PC-3 (cell line): ENCODE measurements at regions of chr4 and their contacts with region 1.

Region 1: DNA sequence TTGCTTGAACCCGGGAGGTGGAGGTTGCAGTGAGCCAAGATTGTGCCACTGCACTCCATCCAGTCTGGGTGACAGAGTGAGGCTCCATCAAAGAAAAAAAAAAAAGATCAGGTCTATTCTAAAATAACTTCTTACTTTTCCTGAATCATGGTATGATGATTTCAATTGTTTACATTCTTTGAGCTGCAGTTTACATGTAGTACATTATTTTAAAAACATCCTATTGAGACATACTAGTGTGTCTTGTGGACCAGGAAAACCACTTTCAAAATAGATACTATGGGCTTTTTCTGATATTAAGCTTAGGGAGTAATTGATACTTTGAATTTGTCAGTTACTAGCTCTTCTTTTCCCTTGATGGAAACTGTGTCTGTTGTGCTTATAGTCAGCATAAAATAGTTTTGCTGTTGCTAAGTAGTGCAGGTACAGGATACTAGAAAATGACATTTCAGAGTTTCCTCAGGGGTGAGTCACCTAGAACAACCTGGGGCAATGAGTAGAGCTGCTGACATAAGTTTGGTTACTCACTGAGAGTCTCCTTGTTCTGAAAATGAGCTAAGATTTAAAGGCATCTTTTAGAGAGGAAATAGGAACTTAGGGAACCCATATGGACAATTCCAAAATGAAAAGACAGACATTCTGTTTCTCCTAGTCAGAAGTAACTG is 53.2 kb upstream of the C4orf54 start:
- DNase-seq: peak; percentile 87
- ATAC-seq: peak; percentile 95
- H3K4me3 ChIP-seq: no peak overlapping the region
- H3K27ac ChIP-seq: peak overlapping the region; percentile 81
- H3K4me1 ChIP-seq: peaks cover 30% of the 10 kb centered on the region
- H3K27me3 ChIP-seq: no peaks in the 10 kb centered on the region
- CTCF ChIP-seq: no peak

Region 2: GRCh38 chr4:101649790-101650515 is 1939.1 kb after region 1 on chr4:
- CTCF ChIA-PET with region 1: no interaction called
- POLR2A ChIA-PET with region 1: interaction called, 15 read pairs
- intact Hi-C with region 1: no loop called
- DNase-seq: no peak
- ATAC-seq: no peak; the same call in 1 of the 2 replicates
- H3K4me3 ChIP-seq: no peak overlapping the region
- H3K27ac ChIP-seq: no peak overlapping the region
- H3K4me1 ChIP-seq: no peaks in the 10 kb centered on the region
- H3K27me3 ChIP-seq: no peaks in the 10 kb centered on the region
- CTCF ChIP-seq: no peak